Esophagus muscularis mucosa (tissue), 4 donors: ENCODE measurements at regions of chr1 and their contacts with region 1.

Region 1: DNA sequence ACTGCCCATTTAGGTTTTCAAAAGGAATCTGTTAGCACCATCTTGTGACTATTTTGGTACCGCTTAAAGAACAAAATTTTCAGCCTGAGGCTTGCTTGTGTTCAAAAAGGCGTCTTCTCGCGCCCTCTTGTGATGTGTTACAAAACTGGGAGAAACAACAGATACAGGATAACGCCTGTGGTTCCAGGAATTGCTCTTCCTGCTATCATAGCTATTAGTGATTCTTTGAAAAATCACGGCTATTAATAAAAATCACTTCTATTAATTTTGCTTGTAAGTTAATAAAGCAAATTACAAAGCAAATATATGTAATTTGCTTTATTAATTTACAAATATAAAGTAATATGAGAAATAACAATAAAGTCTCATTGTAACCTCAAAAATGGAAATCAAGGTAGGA is 82.2 kb upstream of the ABCD3 start:
- DNase-seq: no peak
- H3K4me3 ChIP-seq: no peak overlapping the region
- H3K27ac ChIP-seq: no peak overlapping the region
- H3K4me1 ChIP-seq: peaks cover 11 to 18% (median 14%) of the 10 kb centered on the region in 4 donors
- H3K27me3 ChIP-seq: no peaks in the 10 kb centered on the region
- CTCF ChIP-seq: peak; percentile 84 to 98 (median 89)
- EP300 ChIP-seq: no peak
- POLR2A ChIP-seq: no peak

Region 2: DNA sequence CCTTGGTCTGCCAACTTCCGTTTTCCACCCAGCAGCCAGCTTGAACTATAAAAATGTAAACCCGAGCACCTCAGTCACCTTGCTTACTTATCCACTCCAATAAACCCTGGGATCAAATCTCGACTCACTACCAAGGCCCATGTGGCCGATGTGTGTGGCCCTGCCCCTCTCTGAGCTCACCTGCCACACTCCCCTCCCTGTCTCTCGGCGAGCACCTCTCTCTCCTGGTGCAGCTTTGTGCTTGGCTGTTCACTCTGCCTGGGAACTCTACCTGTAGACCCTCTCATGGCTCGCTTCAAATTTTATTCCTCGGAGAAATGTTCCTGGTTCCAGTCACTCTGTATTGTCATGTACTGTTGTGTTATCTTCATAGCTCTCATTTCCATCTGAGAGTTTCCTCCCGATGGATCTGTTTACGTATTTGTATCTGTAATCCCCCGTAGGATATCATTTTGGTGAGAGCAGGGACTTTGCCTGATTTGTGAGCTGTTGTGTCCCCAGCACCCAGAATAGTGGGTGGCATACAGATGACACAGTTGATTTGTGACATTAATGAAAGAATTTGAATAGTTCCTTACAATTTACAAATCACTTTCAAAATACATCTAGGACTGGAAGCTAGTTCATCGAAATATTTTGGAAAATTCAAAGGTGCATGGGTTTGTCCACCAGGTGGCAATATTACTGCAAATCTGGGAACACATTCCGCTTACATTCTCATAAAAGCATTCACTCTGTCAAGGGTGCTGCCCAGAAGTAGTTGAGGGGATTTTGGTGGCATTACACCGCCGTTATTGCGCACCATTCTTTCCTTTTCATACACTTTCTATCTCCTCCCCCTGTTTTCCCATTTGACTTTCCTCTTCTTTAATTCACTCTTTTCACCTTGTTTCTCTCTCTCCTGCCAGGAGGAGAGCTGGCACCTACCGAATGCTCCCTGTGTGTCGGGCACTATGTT is 310.3 kb before region 1 on chr1:
- intact Hi-C with region 1: loop called (anchors 2 kb)
- DNase-seq: no peak
- H3K4me3 ChIP-seq: no peak overlapping the region
- H3K27ac ChIP-seq: no peak overlapping the region
- H3K4me1 ChIP-seq: peaks cover 0 to 15% (median 7%) of the 10 kb centered on the region in 4 donors
- H3K27me3 ChIP-seq: peaks cover 0 to 1% (median 0%) of the 10 kb centered on the region in 4 donors
- CTCF ChIP-seq: peak; percentile 72 to 80 (median 73)
- EP300 ChIP-seq: no peak
- POLR2A ChIP-seq: no peak

Region 3: DNA sequence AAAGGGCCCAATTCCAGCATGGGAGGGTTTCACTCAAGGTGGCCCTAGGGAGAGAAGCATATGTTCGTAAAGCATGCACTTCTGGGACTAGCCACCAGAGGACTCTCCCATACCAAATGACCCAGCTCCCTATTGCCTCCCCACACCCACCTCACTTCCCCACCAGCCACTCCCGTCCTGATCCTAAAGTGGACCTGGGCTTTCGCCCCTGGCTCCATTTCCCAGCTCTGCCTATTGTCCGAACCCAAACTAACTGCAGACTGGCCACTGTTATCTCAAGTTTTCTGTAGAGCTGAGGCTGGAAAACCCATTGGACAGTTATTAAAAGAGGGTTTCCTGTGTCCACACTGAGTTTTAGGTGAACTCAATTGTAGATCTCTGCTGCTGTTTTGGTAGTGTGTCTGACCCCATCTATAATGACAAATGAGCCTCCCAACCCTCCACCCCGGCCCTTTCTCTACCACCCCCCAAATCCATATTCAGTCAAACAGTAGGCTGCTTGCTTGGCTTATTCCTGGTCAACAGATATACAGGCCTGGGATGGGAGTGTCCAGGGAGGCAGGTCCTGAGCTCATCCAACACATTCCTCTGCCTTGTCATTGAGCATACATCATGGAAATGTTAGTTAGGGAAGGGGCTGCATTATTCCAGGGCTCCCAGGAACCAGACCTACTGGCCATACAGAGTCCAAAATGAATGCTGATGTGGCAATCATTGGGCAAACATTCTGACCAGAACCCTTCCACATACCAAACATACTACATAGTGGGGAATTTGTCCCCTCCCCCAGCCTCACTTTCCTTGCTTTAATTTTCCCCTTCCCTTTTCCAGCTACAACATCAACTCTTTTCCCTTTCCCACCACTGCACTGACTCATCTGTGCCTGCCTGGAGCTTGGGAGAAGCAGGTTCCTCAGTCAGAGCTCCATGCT is 274.2 kb before region 1 on chr1:
- intact Hi-C with region 1: loop called (anchors 2 kb)
- DNase-seq: no peak
- H3K4me3 ChIP-seq: no peak overlapping the region
- H3K27ac ChIP-seq: no peak overlapping the region
- H3K4me1 ChIP-seq: peaks cover 15 to 39% (median 26%) of the 10 kb centered on the region in 4 donors
- H3K27me3 ChIP-seq: no peaks in the 10 kb centered on the region
- CTCF ChIP-seq: peak; percentile 90 to 95 (median 94)
- EP300 ChIP-seq: no peak
- POLR2A ChIP-seq: no peak

Region 4: DNA sequence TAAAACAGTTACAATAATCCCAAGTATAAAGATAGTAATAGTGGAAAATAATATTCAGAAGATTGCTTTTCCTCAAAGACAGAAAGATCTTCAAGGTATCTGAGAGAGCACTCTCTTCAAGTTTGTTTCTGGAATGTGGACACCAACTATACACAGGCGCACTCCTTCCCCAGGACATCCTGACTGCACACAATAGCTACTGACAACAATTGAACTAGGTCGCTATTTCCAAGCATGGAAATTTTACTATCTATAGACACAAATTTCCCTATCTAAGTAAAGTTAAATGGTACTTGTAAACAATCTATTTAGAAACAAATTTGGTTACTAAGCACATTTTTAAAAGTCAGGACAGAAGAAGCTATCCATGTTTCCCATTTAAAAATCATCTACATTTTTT is 117.6 kb before region 1 on chr1:
- intact Hi-C with region 1: no loop called
- DNase-seq: no peak
- H3K4me3 ChIP-seq: no peak overlapping the region
- H3K27ac ChIP-seq: peak overlapping the region in 2 of 4 donors; percentile 10 to 43
- H3K4me1 ChIP-seq: peaks cover 0 to 7% (median 1%) of the 10 kb centered on the region in 4 donors
- H3K27me3 ChIP-seq: no peaks in the 10 kb centered on the region
- CTCF ChIP-seq: no peak
- EP300 ChIP-seq: no peak
- POLR2A ChIP-seq: no peak

Region 5: GRCh38 chr1:94237291-94238226 is 98.4 kb before region 1 on chr1 and contains the start of gene ARHGAP29:
- intact Hi-C with region 1: loop called (anchors 2 kb)
- DNase-seq: no peak
- H3K4me3 ChIP-seq: peak within 1 kb of the TSS; percentile 80 to 96 (median 90)
- H3K27ac ChIP-seq: peak within 1 kb of the TSS; percentile 87 to 92 (median 91)
- H3K4me1 ChIP-seq: peaks cover 10 to 35% (median 28%) of the 10 kb centered on the region in 4 donors
- H3K27me3 ChIP-seq: peaks cover 0 to 22% (median 0%) of the 10 kb centered on the region in 4 donors
- CTCF ChIP-seq: no peak
- EP300 ChIP-seq: no peak
- POLR2A ChIP-seq: peak; percentile 26
- total RNA-seq, gene ARHGAP29: 18.4 to 40.2 (median 23.7) TPM

Region 6: GRCh38 chr1:94255476-94255875 is 80.5 kb before region 1 on chr1:
- intact Hi-C with region 1: no loop called
- DNase-seq: no peak
- H3K4me3 ChIP-seq: no peak overlapping the region
- H3K27ac ChIP-seq: no peak overlapping the region
- H3K4me1 ChIP-seq: peaks cover 9 to 18% (median 13%) of the 10 kb centered on the region in 4 donors
- H3K27me3 ChIP-seq: no peaks in the 10 kb centered on the region
- CTCF ChIP-seq: no peak
- EP300 ChIP-seq: no peak
- POLR2A ChIP-seq: no peak

Region 7: DNA sequence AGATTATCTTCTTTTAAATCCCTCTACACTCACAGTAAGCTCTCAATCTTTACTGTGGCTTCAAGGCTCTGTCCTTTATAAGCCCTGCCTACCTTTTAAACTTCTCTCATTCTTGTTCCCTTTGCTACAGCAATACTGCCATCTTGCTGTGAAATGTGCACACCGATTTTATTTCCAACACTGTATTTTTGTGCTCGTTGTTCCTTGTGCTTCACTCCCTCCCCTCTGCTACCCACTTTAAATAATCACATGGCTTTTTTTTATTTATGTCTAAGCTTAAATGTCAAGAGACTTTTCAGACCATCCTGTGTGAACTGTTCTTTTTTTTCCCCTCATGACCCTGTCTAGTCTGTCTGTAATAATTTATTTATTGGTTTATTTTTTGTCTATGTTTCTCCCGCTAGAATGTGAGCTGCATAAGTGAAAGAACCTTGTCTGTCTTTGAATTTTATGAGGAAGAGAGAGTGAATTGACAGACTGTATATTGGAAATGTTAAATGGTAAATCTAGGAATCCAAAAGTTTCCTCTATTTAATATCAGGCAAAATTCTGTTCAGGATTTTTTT is 127.9 kb after region 1 on chr1:
- intact Hi-C with region 1: loop called (anchors 10 kb)
- DNase-seq: no peak
- H3K4me3 ChIP-seq: no peak overlapping the region
- H3K27ac ChIP-seq: peak overlapping the region in 1 of 4 donors; percentile 28
- H3K4me1 ChIP-seq: peaks cover 7 to 12% (median 12%) of the 10 kb centered on the region in 4 donors
- H3K27me3 ChIP-seq: no peaks in the 10 kb centered on the region
- CTCF ChIP-seq: peak; percentile 55 to 66 (median 62)
- EP300 ChIP-seq: no peak
- POLR2A ChIP-seq: no peak